WTC11 (cell line): ENCODE measurements at regions of chr6 and their contacts with region 1.

Region 1: DNA sequence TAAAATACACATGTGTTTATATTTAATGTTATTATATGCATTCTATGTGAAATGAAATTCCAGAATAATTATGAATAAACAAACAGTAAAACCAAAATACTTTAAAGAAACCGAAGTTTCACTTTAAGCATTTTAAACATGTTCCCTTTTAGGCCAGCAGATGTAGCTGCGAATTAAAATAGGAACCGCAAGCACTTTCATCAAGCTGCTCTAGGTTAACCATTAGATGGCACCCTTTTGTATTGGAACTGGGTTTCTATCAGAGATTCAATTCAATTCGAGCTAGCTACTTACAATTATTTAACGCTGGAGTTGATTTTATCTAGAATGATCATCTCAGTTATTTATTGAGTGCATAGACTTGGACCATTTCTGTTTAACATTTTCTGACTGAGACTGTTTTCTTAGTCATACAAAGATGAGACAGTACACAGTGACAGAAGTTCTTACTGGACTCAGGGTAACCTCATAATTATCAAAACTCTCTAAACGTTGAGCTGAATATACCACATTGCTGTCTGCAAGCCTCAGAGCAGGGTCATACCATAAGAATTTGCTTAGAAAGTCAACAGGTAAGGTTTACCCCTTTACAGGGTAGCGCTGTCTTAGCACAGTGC is 8.5 kb downstream of the TMEM242 start:
- DNase-seq: no peak
- ATAC-seq: peak; percentile 80
- H3K4me3 Mint-ChIP-seq: no peak overlapping the region
- H3K27ac Mint-ChIP-seq: no peak overlapping the region
- H3K4me1 Mint-ChIP-seq: no peaks in the 10 kb centered on the region
- H3K27me3 Mint-ChIP-seq: no peaks in the 10 kb centered on the region
- CTCF ChIP-seq: 0 out of 2 replicates have a peak, but pooled peaks have one; percentile 20

Region 2: GRCh38 chr6:157211603-157212455 is 103.0 kb before region 1 on chr6:
- CTCF ChIA-PET with region 1: no interaction called
- POLR2A ChIA-PET with region 1: no interaction called
- DNase-seq: no peak
- ATAC-seq: peak; percentile 48
- H3K4me3 Mint-ChIP-seq: no peak overlapping the region
- H3K27ac Mint-ChIP-seq: no peak overlapping the region
- H3K4me1 Mint-ChIP-seq: no peaks in the 10 kb centered on the region
- H3K27me3 Mint-ChIP-seq: no peaks in the 10 kb centered on the region
- CTCF ChIP-seq: no peak

Region 3: DNA sequence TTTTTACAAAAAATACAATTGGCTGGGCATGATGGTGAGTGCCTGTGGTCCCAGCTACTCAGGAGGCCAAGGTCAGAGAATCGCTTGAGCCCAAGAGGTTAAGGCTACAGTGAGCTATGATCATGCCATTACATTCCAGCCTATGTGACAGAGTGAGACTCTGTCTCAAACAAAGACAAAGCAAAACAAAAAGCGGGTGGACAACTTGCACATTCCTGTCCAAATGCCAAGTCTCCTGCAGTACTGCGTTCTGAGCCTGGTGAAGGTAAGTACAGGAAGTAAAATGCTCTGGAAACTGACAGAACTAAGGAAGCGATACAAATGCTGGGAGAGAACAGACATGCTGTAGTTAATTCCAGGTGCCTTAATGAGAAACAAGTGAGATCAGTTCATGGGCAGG is 28.9 kb after region 1 on chr6:
- CTCF ChIA-PET with region 1: no interaction called
- POLR2A ChIA-PET with region 1: no interaction called
- DNase-seq: no peak
- ATAC-seq: no peak
- H3K4me3 Mint-ChIP-seq: no peak overlapping the region
- H3K27ac Mint-ChIP-seq: no peak overlapping the region
- H3K4me1 Mint-ChIP-seq: no peaks in the 10 kb centered on the region
- H3K27me3 Mint-ChIP-seq: no peaks in the 10 kb centered on the region; the same call in 1 of the 2 replicates
- CTCF ChIP-seq: no peak

Region 4: DNA sequence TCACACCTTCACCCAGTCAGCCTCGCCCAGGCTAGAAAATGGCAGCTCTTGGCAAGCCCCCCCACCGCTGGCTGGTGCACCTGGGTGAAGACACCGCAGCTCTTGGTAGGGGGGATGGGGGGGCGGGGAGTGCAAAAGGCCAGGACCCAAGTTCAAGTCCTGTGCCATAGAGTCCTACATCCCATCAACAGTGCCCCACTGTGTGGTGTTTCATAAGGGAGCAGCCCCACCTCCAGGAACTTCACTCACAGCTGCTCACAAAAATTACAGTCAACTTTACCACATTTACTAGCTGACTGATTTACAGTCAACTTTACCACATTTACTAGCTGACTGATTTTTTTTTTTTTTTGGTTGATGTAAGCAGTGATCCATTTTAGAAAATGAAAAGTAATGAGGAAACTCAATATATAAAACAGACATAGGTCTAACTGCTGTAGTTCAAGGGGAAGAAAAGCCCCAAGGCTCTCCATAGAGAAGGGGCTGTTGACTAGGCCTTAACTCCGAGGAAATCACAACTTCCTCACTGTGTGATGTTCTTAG is 299.3 kb after region 1 on chr6:
- CTCF ChIA-PET with region 1: interaction called, 16 read pairs
- POLR2A ChIA-PET with region 1: no interaction called
- DNase-seq: no peak
- ATAC-seq: no peak
- H3K4me3 Mint-ChIP-seq: no peak overlapping the region
- H3K27ac Mint-ChIP-seq: no peak overlapping the region
- H3K4me1 Mint-ChIP-seq: peaks cover 25% of the 10 kb centered on the region
- H3K27me3 Mint-ChIP-seq: peaks cover 3% of the 10 kb centered on the region
- CTCF ChIP-seq: no peak